ENCODE measurements at regions of chr4 and their contacts with region 1.

Region 1: DNA sequence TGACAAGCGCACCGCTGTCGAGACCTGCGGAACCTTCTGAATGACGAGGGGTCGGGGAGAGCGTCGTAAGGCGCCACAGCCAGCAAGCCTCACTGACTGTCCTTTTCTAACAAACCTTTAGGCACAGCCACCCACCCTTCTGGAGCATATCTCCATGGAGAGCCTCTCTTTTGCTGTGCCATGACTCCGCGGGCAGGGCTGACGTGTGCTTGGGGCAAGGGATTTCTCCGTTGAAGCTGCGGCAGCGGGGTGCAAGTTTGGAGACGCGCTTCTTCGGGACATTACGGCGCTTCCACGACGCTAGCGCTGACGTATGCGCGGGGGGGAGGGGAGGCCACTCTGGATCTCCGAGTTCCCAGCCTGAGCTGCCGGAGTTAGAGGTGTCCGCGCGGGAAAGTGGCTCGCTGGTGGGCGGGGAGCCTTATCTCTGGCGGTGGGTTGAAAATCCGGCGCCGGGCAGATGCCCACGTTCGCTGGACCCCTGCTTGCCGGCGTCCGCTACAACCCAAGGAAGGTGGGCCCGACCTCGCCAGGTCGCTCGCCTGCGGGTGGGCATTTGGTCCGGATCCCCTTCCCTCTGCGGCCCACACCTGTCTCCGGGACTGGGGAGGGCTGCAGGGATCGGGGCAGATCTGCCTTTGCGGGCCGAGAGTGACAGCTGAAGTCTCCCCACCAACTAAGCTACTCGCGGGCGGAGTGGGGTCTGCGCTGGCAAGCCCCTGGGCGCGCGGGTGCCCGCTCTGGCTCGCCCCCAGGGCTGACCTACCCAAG is 543 bp upstream of the SLC10A7 start:
- DNase-seq: peak; percentile 86
- ATAC-seq: peak; percentile 75
- H3K4me3 ChIP-seq: peak overlapping the region; percentile 61 to 98 (median 96)
- H3K4me3 Mint-ChIP-seq: no peak overlapping the region
- H3K27ac ChIP-seq: peak overlapping the region; percentile 62 to 75
- H3K27ac Mint-ChIP-seq: no peak overlapping the region
- H3K4me1 ChIP-seq: peaks cover 18 to 22% of the 10 kb centered on the region in 2 donors
- H3K4me1 Mint-ChIP-seq: peaks cover 22% of the 10 kb centered on the region
- H3K27me3 ChIP-seq: no peaks in the 10 kb centered on the region
- H3K27me3 Mint-ChIP-seq: no peaks in the 10 kb centered on the region
- CTCF ChIP-seq: no peak

Region 2: GRCh38 chr4:146450524-146450923 is 71.8 kb before region 1 on chr4:
- CTCF ChIA-PET with region 1: no interaction called
- POLR2A ChIA-PET with region 1: no interaction called
- intact Hi-C with region 1: loop called (anchors 10 kb)
- DNase-seq: no peak
- ATAC-seq: no peak
- H3K4me3 ChIP-seq: no peak overlapping the region
- H3K4me3 Mint-ChIP-seq: no peak overlapping the region
- H3K27ac ChIP-seq: peak overlapping the region in 1 of 2 donors; percentile 41
- H3K27ac Mint-ChIP-seq: no peak overlapping the region
- H3K4me1 ChIP-seq: peaks cover 3 to 7% of the 10 kb centered on the region in 2 donors
- H3K4me1 Mint-ChIP-seq: peaks cover 22% of the 10 kb centered on the region
- H3K27me3 ChIP-seq: no peaks in the 10 kb centered on the region
- H3K27me3 Mint-ChIP-seq: no peaks in the 10 kb centered on the region
- CTCF ChIP-seq: no peak

Region 3: GRCh38 chr4:146567396-146567795 is 45.1 kb after region 1 on chr4:
- CTCF ChIA-PET with region 1: no interaction called
- POLR2A ChIA-PET with region 1: no interaction called
- intact Hi-C with region 1: no loop called
- DNase-seq: no peak
- ATAC-seq: no peak
- H3K4me3 ChIP-seq: no peak overlapping the region
- H3K4me3 Mint-ChIP-seq: no peak overlapping the region
- H3K27ac ChIP-seq: no peak overlapping the region
- H3K27ac Mint-ChIP-seq: no peak overlapping the region
- H3K4me1 ChIP-seq: no peaks in the 10 kb centered on the region
- H3K4me1 Mint-ChIP-seq: no peaks in the 10 kb centered on the region
- H3K27me3 ChIP-seq: peaks cover 0 to 5% (median 0%) of the 10 kb centered on the region in 4 experiments
- H3K27me3 Mint-ChIP-seq: peaks cover 22% of the 10 kb centered on the region
- CTCF ChIP-seq: no peak

Region 4: DNA sequence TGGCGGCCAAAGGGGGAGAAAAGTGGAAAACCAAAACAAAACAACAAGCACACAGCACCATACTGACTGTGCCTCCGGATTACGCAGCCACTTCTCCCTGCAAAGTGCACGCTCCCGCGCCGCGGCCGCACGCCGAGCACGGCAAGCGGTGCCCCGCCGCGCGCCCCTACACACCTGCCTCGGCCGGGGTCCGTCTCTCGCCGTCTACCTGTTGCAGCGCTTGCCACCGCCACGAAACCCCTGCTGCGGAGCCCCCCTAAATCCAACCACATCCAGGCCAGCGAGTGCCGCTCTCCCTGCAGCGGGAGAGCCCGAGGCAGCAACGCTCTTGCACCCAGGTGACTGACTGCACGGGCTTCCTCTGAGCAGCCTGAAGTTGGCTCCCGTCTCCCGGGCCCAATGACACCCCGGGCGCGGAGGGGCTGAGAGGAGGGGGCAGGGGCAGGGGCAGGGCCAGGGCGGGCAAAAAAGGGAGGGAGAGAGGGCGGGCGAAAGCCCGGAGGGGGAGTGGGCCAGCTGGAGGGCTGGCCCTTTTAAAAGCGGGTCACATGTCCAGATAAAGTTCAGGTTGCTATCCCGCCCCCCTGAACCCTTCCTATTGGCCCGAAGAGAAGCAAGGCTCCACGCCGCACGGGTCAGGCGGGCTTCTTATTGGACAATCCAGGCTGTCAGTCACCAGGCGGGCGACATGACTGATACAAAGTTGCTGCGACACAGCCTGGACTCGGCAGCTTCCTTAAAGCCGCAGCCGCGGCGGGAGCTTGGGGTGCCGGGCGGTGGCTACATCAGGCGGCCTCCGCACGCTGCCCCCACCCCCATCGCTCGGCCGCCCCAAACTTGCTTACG is 1919.9 kb after region 1 on chr4 and contains the start of gene NR3C2:
- CTCF ChIA-PET with region 1: no interaction called
- POLR2A ChIA-PET with region 1: no interaction called
- intact Hi-C with region 1: loop called (anchors 5 kb)
- DNase-seq: peak; percentile 98
- ATAC-seq: peak; percentile 79
- H3K4me3 ChIP-seq: peak within 1 kb of the TSS; percentile 72 to 98 (median 94)
- H3K4me3 Mint-ChIP-seq: peak within 1 kb of the TSS; percentile 95
- H3K27ac ChIP-seq: peak within 1 kb of the TSS; percentile 94
- H3K27ac Mint-ChIP-seq: peak within 1 kb of the TSS; percentile 100
- H3K4me1 ChIP-seq: peaks cover 19 to 29% of the 10 kb centered on the region in 2 donors
- H3K4me1 Mint-ChIP-seq: peaks cover 32% of the 10 kb centered on the region
- H3K27me3 ChIP-seq: peaks cover 0 to 12% (median 6%) of the 10 kb centered on the region in 4 experiments
- H3K27me3 Mint-ChIP-seq: no peaks in the 10 kb centered on the region
- CTCF ChIP-seq: no peak
- total RNA-seq, gene NR3C2: 19.3 and 21.3 TPM in 2 replicates